Activated T-helper 1 cell treated with anti-CD3 and anti-CD28 coated beads, Interleukin-12 subunit alpha, Interleukin-12 subunit beta, Interleukin-2, Interleukin-4 antibody, amounts not matched to agents 30 ng/mL and 10 ng/mL and 1 ng/mL, durations not matched to agents 14 hours and 24 hours and 36 hours (primary cell): ENCODE measurements at regions of chr7 and their contacts with region 1.

Region 1: GRCh38 chr7:112206238-112207044 is at the starts of genes DOCK4 and ZNF277:
- DNase-seq: peak; percentile 98
- H3K4me3 Mint-ChIP-seq: peak within 1 kb of the TSS; percentile 100
- H3K27ac Mint-ChIP-seq: peak within 1 kb of the TSS; percentile 92
- H3K4me1 Mint-ChIP-seq: peaks cover 34% of the 10 kb centered on the region
- H3K27me3 Mint-ChIP-seq: peaks cover 31% of the 10 kb centered on the region
- total RNA-seq, gene DOCK4: 0.31 and 0.37 TPM in 2 replicates
- total RNA-seq, gene ZNF277: 12.1 and 14.0 TPM in 2 replicates

Region 2: GRCh38 chr7:111083413-111083812 is 1123.0 kb before region 1 on chr7:
- intact Hi-C with region 1: loop called (anchors 5 kb)
- DNase-seq: peak; percentile 74
- H3K4me3 Mint-ChIP-seq: peak overlapping the region; percentile 59
- H3K27ac Mint-ChIP-seq: peak overlapping the region; percentile 82
- H3K4me1 Mint-ChIP-seq: peaks cover 84% of the 10 kb centered on the region
- H3K27me3 Mint-ChIP-seq: no peaks in the 10 kb centered on the region

Region 3: GRCh38 chr7:111561885-111562732 is 644.3 kb before region 1 on chr7 and contains the start of gene IMMP2L:
- intact Hi-C with region 1: loop called (anchors 5 kb)
- DNase-seq: peak; percentile 89
- H3K4me3 Mint-ChIP-seq: peak within 1 kb of the TSS; percentile 87
- H3K27ac Mint-ChIP-seq: peak within 1 kb of the TSS; percentile 89
- H3K4me1 Mint-ChIP-seq: peaks cover 37% of the 10 kb centered on the region
- H3K27me3 Mint-ChIP-seq: no peaks in the 10 kb centered on the region
- total RNA-seq, gene IMMP2L: 11.3 and 16.0 TPM in 2 replicates

Region 4: GRCh38 chr7:112172870-112173567 is 33.4 kb before region 1 on chr7:
- intact Hi-C with region 1: no loop called
- DNase-seq: no peak
- H3K4me3 Mint-ChIP-seq: no peak overlapping the region
- H3K27ac Mint-ChIP-seq: no peak overlapping the region
- H3K4me1 Mint-ChIP-seq: no peaks in the 10 kb centered on the region
- H3K27me3 Mint-ChIP-seq: peaks cover 21% of the 10 kb centered on the region

Region 5: DNA sequence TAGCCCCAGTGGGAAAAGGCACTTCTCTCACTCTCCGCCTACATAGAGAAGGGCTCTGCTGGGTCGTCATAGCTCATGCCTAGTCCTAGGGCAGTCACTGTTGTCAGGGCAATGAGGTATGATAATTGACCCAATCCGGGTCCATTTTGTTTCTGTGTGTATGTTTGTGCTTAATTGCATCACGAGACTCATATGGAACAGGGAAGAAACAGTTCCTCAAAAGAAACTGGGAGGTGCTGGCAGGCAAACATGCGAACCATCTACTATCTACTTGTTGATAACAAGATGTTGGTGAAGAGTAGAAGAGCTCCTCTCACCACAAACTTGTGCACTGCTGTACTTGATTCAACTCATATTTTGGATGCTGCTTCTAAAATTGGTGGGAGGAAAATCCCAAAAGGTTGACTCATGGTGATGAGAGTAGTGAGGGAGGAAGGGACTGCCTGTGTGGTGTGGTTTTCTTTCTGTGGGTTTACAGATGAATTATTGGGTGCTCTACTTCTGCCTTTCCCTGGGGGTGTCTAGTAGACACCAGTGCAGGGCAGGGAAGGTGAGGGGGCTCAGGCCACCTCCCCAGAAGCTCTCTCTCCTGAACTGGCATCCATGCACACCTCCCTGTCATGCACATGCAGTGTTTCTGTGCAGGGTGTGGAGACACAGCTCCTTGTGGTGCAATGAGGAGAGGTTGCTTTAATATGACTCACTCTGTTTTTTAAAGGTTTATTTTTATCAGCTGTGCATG is 303.7 kb after region 1 on chr7:
- intact Hi-C with region 1: loop called (anchors 1 kb)
- DNase-seq: no peak
- H3K4me3 Mint-ChIP-seq: peak overlapping the region; percentile 36
- H3K27ac Mint-ChIP-seq: peak overlapping the region; percentile 22
- H3K4me1 Mint-ChIP-seq: peaks cover 31% of the 10 kb centered on the region
- H3K27me3 Mint-ChIP-seq: peaks cover 2% of the 10 kb centered on the region

Region 6: DNA sequence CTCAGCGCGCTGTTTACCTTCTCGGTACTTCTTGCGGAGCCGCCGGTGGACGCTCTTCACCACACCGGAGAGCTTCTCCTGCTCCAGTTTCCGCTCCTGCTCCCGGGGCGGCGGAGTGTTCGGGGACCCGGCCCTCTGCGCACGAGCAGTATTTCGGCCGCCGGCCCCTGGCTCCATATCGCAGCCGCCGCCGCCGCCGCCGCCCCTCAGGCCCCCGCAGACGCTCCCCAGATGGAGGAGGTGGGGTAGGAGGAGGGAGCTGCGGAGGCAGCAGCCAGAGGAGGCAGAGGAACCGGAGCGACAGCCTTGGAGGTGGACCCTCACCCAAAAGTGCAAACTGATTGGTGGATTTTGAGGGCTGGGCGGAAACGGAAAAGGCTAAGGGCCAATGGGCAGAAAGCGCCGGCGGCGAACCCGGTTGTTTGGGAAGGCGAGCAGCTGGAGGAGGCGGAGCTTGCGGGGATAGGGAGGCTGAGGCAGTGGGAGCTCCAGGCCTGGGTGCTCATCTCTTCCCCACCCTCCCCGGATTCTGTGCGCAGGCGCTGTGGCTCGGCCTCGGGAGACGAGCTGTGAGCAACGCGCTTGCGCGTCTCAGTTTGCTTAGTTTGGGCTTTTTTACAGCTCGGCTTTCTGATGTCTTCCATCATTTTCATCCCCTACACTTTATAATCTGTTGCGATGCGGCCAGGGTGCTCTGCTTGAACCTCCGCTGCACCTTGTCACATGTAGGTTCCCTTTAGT is 733.3 kb after region 1 on chr7:
- intact Hi-C with region 1: loop called (anchors 1 kb)
- DNase-seq: peak; percentile 99
- H3K4me3 Mint-ChIP-seq: peak overlapping the region; percentile 91
- H3K27ac Mint-ChIP-seq: peak overlapping the region; percentile 95
- H3K4me1 Mint-ChIP-seq: peaks cover 39% of the 10 kb centered on the region
- H3K27me3 Mint-ChIP-seq: peaks cover 6% of the 10 kb centered on the region